ENCODE measurements at regions of chr19 and their contacts with region 1.

Region 1: DNA sequence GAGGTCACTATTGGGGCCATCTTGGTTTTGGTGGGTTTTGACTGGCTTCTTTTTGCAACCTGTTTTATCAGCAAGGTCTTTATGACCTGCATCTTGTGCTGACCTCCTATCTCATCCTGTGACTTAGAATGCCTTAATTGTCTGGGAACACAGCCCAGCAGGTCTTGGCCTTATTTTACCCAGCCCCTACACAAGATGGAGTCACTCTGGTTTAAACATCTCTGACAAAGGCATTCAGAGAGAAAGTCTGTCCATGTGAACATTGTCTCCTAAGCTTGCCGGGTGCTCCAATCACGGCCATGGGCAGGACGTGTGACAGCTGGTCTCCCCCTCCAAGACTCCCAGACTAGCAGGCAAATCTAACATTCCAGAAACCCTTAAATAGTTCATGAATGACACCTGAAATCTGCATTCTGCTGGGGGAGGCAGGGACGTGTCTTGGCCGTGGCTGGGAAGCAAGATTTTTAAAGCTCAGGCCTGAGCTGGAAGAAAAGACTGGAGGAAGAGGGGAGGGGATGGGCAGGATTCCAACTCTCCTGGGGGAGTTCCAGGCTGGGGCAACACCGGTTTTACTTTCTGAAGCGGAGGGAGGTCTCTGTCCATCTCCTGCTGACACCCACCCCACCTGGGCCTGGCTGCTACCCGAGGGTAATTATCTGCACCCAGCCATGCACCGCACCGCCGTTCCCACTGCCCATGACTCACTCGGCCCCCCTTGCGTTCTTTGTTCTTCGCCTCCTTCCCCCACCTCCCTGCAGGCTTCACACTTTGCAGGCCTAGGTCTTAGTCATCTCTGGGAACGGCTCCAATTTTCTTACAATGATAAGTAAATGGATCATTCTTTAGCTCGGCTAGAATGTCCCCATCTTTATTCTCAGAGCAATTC is 11.6 kb upstream of the OR1M1 start:
- DNase-seq: peak; percentile 80 to 88
- ATAC-seq: peak; percentile 84
- H3K4me3 ChIP-seq: no peak overlapping the region
- H3K27ac ChIP-seq: no peak overlapping the region
- H3K4me1 ChIP-seq: no peaks in the 10 kb centered on the region
- H3K27me3 ChIP-seq: no peaks in the 10 kb centered on the region

Region 2: DNA sequence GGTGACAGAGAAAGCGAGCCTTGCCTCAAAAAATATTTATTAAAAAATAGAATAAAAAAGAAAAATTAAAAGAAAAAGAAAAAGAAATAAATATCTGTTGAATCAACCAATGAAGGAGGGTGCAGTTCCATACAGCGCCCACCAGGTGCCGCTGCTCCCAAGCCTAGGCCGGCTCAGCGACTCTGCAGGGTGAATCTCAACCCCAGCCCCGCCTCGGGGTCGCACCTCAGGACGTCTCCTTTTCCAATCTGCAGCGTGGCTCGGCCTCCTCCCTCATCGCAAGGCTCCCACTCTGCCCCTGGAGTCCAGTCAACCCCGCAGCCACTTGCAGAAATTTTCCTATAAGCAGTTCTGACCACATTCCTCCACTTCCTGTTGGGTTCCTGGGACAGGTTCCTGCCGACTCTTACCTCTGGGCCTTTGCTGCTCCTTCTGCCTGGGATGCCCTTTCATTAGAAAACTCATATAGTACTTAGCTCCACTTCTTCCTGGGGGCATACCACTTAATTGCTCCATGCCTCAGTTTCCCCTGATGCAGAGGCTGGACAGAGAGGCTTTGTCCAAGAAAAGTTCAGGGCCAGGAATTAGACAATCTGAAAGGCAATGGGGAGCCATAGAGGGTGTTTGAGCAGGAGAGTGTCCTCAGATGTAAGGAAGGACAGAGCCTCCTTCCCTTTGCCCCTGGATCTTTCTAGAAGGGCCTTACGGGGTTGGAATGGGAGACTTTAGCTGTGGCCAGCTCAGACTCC is 420.5 kb before region 1 on chr19:
- intact Hi-C with region 1: loop called (anchors 2 to 5 kb)
- DNase-seq: peak; percentile 66 to 88
- ATAC-seq: peak; percentile 84
- H3K4me3 ChIP-seq: no peak overlapping the region
- H3K27ac ChIP-seq: no peak overlapping the region
- H3K4me1 ChIP-seq: no peaks in the 10 kb centered on the region
- H3K27me3 ChIP-seq: no peaks in the 10 kb centered on the region

Region 3: DNA sequence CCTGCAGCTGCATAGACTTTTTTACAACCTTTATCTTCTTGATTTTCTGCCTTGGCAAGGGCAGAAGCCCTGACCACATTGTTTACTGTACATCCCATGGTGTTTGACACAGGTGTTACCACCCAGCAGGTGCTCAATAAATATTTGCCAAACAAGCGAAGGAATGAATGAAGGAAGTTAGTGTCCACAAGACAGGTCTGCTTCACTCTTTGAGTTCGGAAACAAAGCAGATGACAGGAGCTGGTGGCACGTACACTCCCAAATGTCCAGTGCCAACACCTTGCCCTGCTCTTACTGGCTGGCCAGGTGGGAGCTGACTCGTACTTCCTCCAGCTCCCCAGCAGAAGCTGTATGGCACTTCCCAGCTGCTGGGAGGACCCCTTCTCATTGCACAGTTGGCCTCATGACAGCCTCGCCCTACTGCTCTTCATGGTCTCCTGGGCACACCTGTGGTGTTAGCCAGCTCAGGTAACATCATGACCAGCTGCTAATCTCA is 43.1 kb before region 1 on chr19:
- intact Hi-C with region 1: no loop called
- DNase-seq: no peak
- ATAC-seq: no peak
- H3K4me3 ChIP-seq: no peak overlapping the region
- H3K27ac ChIP-seq: no peak overlapping the region
- H3K4me1 ChIP-seq: no peaks in the 10 kb centered on the region
- H3K27me3 ChIP-seq: no peaks in the 10 kb centered on the region

Region 4: DNA sequence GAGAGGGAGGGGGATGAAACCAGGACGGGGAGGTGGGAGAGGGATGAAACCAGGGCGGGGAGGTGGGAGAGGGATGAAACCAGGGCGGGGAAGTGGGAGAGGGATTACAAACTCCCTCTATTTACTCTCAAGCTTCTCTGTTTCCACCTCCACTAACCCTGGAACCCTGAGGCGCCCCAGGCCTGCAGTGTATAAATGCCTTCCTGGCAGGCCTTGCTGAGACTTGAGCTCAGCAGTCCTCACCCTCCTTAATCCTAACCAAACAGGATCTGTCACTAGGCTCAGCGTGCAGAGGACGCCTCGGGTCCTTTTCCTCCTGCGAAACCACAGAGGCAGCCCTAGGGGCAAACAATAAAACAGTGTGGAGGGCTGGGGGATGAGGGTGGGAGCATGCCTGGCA is 20.5 kb before region 1 on chr19:
- intact Hi-C with region 1: no loop called
- DNase-seq: no peak
- ATAC-seq: no peak
- H3K4me3 ChIP-seq: no peak overlapping the region
- H3K27ac ChIP-seq: no peak overlapping the region
- H3K4me1 ChIP-seq: no peaks in the 10 kb centered on the region
- H3K27me3 ChIP-seq: no peaks in the 10 kb centered on the region

Measured in aorta (tissue), 5 donors.